Activated B cell treated with CpG ODN at 0.5 μM for 24 hours (primary cell): ENCODE measurements at regions of chr9 and their contacts with region 1.

Region 1: GRCh38 chr9:5628530-5629311 is at the start of gene RIC1:
- DNase-seq: peak; percentile 88
- ATAC-seq: peak; percentile 75
- H3K4me3 Mint-ChIP-seq: peak within 1 kb of the TSS; percentile 100
- H3K27ac Mint-ChIP-seq: peak within 1 kb of the TSS; percentile 100
- H3K4me1 Mint-ChIP-seq: peaks cover 78% of the 10 kb centered on the region
- H3K27me3 Mint-ChIP-seq: no peaks in the 10 kb centered on the region
- CTCF ChIP-seq: no peak
- total RNA-seq, gene RIC1: 68.1 and 85.0 TPM in 2 replicates

Region 2: GRCh38 chr9:5186416-5187169 is 442.1 kb before region 1 on chr9:
- CTCF ChIA-PET with region 1: no interaction called
- POLR2A ChIA-PET with region 1: interaction called, 7 read pairs
- intact Hi-C with region 1: loop called (anchors 1 kb)
- DNase-seq: no peak
- ATAC-seq: peak; percentile 81
- H3K4me3 Mint-ChIP-seq: no peak overlapping the region
- H3K27ac Mint-ChIP-seq: no peak overlapping the region
- H3K4me1 Mint-ChIP-seq: peaks cover 12% of the 10 kb centered on the region
- H3K27me3 Mint-ChIP-seq: no peaks in the 10 kb centered on the region
- CTCF ChIP-seq: no peak

Region 3: DNA sequence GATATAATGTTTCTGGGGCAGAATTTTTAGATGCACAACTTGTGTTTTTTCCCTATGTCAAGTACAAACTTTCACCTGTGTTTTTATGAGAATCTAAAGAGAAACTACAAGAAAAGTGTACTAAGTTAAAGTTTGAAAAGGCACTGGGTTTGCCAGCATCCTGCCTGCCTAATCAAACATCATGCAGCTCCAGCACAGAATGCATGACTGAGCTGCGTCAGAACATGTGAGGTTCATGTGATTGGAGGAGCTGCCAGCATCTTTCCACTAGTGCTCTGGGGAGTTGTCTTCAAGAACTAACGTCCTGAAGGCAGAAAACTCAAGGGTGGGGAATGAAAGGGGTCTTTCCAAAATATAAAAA is 45.9 kb before region 1 on chr9:
- CTCF ChIA-PET with region 1: interaction called, 3 read pairs
- POLR2A ChIA-PET with region 1: interaction called, 104 read pairs
- intact Hi-C with region 1: loop called (anchors 1 kb)
- DNase-seq: peak; percentile 45
- ATAC-seq: peak; percentile 62
- H3K4me3 Mint-ChIP-seq: peak overlapping the region; percentile 71
- H3K27ac Mint-ChIP-seq: peak overlapping the region; percentile 99
- H3K4me1 Mint-ChIP-seq: peaks cover 89% of the 10 kb centered on the region
- H3K27me3 Mint-ChIP-seq: no peaks in the 10 kb centered on the region
- CTCF ChIP-seq: no peak

Region 4: DNA sequence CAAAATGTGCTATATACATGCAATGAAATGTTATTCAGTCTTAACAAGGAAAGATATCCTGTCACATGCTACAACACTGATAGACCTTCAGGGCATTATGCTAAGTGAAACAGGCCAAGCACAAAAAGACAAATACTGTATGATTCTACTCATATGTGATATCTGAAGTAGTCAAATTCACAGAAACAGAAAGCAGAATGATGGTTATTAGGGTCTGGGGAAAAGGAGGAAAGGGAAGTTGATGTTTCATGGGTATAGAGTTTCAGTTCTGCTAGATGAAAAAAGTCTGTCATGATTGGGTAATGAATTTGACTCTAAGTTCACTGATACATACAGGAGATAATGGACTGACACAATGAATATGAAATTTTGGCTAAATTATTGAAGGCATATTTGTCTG is 11.0 kb before region 1 on chr9:
- CTCF ChIA-PET with region 1: interaction called, 4 read pairs
- POLR2A ChIA-PET with region 1: interaction called, 77 read pairs
- intact Hi-C with region 1: loop called (anchors 1 kb)
- DNase-seq: no peak
- ATAC-seq: peak; percentile 95
- H3K4me3 Mint-ChIP-seq: peak overlapping the region; percentile 45
- H3K27ac Mint-ChIP-seq: peak overlapping the region; percentile 79
- H3K4me1 Mint-ChIP-seq: peaks cover 55% of the 10 kb centered on the region
- H3K27me3 Mint-ChIP-seq: no peaks in the 10 kb centered on the region
- CTCF ChIP-seq: no peak

Region 5: GRCh38 chr9:5714501-5715401 is 86.0 kb after region 1 on chr9:
- CTCF ChIA-PET with region 1: no interaction called
- POLR2A ChIA-PET with region 1: no interaction called
- intact Hi-C with region 1: loop called (anchors 5 kb)
- DNase-seq: no peak
- ATAC-seq: no peak
- H3K4me3 Mint-ChIP-seq: no peak overlapping the region
- H3K27ac Mint-ChIP-seq: no peak overlapping the region
- H3K4me1 Mint-ChIP-seq: peaks cover 36% of the 10 kb centered on the region
- H3K27me3 Mint-ChIP-seq: no peaks in the 10 kb centered on the region
- CTCF ChIP-seq: no peak

Region 6: GRCh38 chr9:6412487-6413364 is 784.0 kb after region 1 on chr9 and contains the start of gene UHRF2:
- CTCF ChIA-PET with region 1: no interaction called
- POLR2A ChIA-PET with region 1: interaction called, 19 read pairs
- intact Hi-C with region 1: loop called (anchors 1 kb)
- DNase-seq: peak; percentile 95
- ATAC-seq: peak; percentile 87
- H3K4me3 Mint-ChIP-seq: peak within 1 kb of the TSS; percentile 82
- H3K27ac Mint-ChIP-seq: peak within 1 kb of the TSS; percentile 96
- H3K4me1 Mint-ChIP-seq: peaks cover 61% of the 10 kb centered on the region
- H3K27me3 Mint-ChIP-seq: no peaks in the 10 kb centered on the region
- CTCF ChIP-seq: no peak
- total RNA-seq, gene UHRF2: 81.1 and 114 TPM in 2 replicates